Right ventricle myocardium inferior (tissue), 1 donor: ENCODE measurements at regions of chr10 and their contacts with region 1.

Region 1: DNA sequence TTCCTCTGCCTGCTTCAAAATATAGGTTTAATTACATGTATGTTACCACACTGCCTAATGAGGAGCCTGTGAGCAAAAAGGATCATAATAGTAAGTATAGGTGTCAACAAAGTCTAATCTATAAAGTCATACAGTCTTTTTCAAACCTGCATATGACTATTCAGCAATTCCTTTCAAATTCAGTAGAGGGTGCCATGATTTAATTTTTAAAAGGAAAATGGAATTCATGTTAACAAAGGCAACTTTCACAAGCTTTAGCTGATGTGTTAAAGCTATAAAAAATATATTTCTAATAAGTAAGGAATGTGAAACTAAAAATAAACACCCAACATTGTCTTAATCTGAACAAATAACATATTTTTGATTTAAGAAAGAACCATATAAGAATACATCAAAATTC is 52.1 kb downstream of the MPP7 start:
- DNase-seq: no peak
- ATAC-seq: no peak

Region 2: GRCh38 chr10:27701938-27702537 is 548.7 kb before region 1 on chr10:
- intact Hi-C with region 1: no loop called
- DNase-seq: no peak
- ATAC-seq: peak; percentile 20

Region 3: GRCh38 chr10:28202941-28203352 is 47.8 kb before region 1 on chr10:
- intact Hi-C with region 1: no loop called
- DNase-seq: no peak
- ATAC-seq: peak; percentile 97

Region 4: DNA sequence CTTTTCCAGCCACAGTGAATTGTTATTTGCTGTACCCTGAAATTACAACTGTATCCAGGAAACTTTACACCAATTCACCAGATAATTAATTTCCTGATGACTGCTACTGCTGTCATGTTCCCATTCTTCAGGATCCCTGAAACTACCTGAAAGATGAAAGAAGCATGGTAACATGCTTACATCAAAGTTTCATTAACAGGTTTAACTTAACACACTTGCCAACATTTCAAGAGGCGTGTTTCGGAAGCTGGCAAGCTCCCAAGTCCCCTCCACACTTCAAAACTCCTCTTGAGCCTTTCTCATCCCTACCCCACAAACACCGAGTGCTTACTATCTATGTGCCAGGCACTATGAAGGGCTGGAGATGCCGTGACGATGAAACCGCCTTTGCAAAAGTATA is 36.6 kb before region 1 on chr10:
- intact Hi-C with region 1: no loop called
- DNase-seq: no peak
- ATAC-seq: no peak

Region 5: GRCh38 chr10:28381903-28382347 is 131.1 kb after region 1 on chr10:
- intact Hi-C with region 1: loop called (anchors 2 kb)
- DNase-seq: peak; percentile 77
- ATAC-seq: peak; percentile 84

Region 6: GRCh38 chr10:28429573-28430216 is 178.9 kb after region 1 on chr10:
- intact Hi-C with region 1: no loop called
- DNase-seq: no peak
- ATAC-seq: no peak